Activated B cell treated with CpG ODN at 0.5 μM for 24 hours (primary cell): ENCODE measurements at regions of chr19 and their contacts with region 1.

Region 1: GRCh38 chr19:57578487-57579205 is at the start of gene ZNF416:
- DNase-seq: peak; percentile 79
- ATAC-seq: peak; percentile 92
- H3K4me3 Mint-ChIP-seq: peak within 1 kb of the TSS; percentile 86
- H3K27ac Mint-ChIP-seq: peak within 1 kb of the TSS; percentile 84
- H3K4me1 Mint-ChIP-seq: peaks cover 32% of the 10 kb centered on the region
- H3K27me3 Mint-ChIP-seq: no peaks in the 10 kb centered on the region
- CTCF ChIP-seq: no peak
- total RNA-seq, gene ZNF416: 12.6 and 13.8 TPM in 2 replicates

Region 2: DNA sequence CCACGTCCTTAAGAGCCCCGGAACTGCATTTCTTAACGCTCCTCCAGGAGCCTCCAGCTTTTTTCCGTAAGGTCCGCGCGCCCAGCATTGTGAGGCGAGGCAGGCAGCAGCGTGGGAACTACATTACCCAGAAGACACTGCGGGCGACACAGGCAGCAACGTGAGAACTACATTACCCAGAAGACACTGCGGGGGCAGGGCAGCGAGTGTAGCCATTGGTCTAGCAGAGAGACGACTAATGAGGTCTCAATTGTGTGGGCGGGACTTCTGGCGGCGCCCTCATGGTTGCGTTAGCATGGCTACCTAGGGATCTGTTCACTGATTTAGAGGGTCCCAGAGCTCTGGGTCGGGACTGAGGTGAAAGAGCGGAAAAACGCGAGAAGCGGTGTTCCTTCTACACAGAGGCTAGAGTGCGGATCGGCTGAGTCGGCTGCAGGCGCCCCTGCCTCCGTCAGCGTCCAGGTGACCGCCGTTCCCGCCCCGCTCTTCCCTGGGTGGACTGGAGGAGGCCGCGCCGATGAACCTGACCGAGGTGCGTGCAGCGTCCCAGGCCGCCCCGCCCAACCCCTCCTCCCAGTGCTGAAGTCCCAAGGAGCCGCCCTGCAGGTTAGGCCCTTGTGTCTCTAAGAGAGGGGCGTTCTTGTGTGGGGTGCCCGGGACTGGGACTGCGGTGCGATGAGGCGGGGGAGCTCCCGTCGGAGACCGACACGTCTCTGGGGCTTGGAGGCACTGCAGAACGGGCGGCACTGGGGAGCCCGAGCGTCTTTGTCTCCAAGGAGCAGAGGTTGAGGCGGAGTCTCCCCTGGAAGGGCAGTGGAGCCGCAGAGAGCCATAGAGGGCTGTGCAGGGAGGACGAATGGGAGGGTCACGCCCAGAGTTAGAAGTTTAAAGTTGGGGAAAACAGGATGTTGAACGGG is 143.3 kb before region 1 on chr19 and contains the start of gene ZNF749:
- CTCF ChIA-PET with region 1: no interaction called
- POLR2A ChIA-PET with region 1: no interaction called
- intact Hi-C with region 1: loop called (anchors 2 kb)
- DNase-seq: peak; percentile 84
- ATAC-seq: peak; percentile 99
- H3K4me3 Mint-ChIP-seq: peak within 1 kb of the TSS; percentile 97
- H3K27ac Mint-ChIP-seq: peak within 1 kb of the TSS; percentile 84
- H3K4me1 Mint-ChIP-seq: peaks cover 25% of the 10 kb centered on the region
- H3K27me3 Mint-ChIP-seq: no peaks in the 10 kb centered on the region
- CTCF ChIP-seq: no peak
- total RNA-seq, gene ZNF749: 16.4 and 18.2 TPM in 2 replicates

Region 3: GRCh38 chr19:57559404-57560025 is 19.1 kb before region 1 on chr19 and contains the start of gene ZNF550:
- CTCF ChIA-PET with region 1: no interaction called
- POLR2A ChIA-PET with region 1: no interaction called
- intact Hi-C with region 1: loop called (anchors 1 kb)
- DNase-seq: peak; percentile 83
- ATAC-seq: peak; percentile 98
- H3K4me3 Mint-ChIP-seq: peak within 1 kb of the TSS; percentile 92
- H3K27ac Mint-ChIP-seq: peak within 1 kb of the TSS; percentile 69
- H3K4me1 Mint-ChIP-seq: peaks cover 33% of the 10 kb centered on the region
- H3K27me3 Mint-ChIP-seq: no peaks in the 10 kb centered on the region
- CTCF ChIP-seq: no peak
- total RNA-seq, gene ZNF550: 16.8 and 18.7 TPM in 2 replicates

Region 4: DNA sequence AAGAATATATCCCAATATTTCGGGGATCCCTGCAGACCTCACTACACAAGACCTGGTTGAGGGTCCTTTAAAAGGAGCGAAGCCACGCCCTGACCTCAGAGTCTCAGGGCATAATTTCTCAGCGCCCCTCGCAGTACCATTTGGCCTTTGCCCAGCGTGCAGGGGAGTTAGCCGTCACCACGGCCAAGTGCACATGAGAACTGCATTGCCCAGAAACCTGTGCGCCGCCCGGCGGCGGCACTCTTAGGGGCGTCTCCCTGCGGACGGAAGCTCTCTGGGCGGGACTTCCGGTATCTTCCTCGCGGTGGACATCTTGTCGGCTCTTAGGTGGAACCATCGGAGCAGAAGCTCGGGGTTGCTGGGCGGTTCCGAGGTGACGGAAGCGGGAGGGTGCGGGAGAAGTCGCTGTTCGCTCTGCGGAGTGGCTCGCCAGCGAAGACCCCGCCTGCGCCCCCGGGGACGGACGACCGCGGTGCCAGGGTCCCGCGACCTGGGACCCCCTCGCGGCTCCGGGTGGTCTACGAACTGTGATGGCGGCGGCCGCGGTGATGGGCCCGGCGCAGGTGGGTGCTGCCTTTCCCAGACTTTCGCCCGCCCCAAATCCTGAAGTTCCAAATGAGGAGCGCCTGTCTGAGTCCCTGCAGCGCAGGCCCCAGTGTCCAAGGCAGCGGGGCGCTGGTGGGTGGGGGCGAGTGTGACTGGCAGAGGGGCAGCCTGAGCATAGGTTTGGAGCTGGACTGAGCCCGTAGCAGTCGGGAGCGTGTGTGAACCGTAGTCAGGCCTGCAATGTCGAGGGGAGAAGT is 35.5 kb after region 1 on chr19 and contains the start of gene ZNF134:
- CTCF ChIA-PET with region 1: no interaction called
- POLR2A ChIA-PET with region 1: interaction called, 9 read pairs
- intact Hi-C with region 1: loop called (anchors 1 kb)
- DNase-seq: peak; percentile 82
- ATAC-seq: peak; percentile 99
- H3K4me3 Mint-ChIP-seq: peak within 1 kb of the TSS; percentile 93
- H3K27ac Mint-ChIP-seq: peak within 1 kb of the TSS; percentile 78
- H3K4me1 Mint-ChIP-seq: peaks cover 39% of the 10 kb centered on the region
- H3K27me3 Mint-ChIP-seq: no peaks in the 10 kb centered on the region
- CTCF ChIP-seq: no peak
- total RNA-seq, gene ZNF134: 32.3 and 38.4 TPM in 2 replicates

Region 5: GRCh38 chr19:57682226-57682766 is 103.7 kb after region 1 on chr19:
- CTCF ChIA-PET with region 1: interaction called, 3 read pairs
- POLR2A ChIA-PET with region 1: interaction called, 5 read pairs
- intact Hi-C with region 1: loop called (anchors 1 kb)
- DNase-seq: no peak
- ATAC-seq: no peak
- H3K4me3 Mint-ChIP-seq: peak overlapping the region; percentile 98
- H3K27ac Mint-ChIP-seq: peak overlapping the region; percentile 90
- H3K4me1 Mint-ChIP-seq: peaks cover 39% of the 10 kb centered on the region
- H3K27me3 Mint-ChIP-seq: peaks cover 8% of the 10 kb centered on the region
- CTCF ChIP-seq: no peak

Region 6: GRCh38 chr19:58002384-58003173 is 423.9 kb after region 1 on chr19 and contains the start of gene ZNF606:
- CTCF ChIA-PET with region 1: no interaction called
- POLR2A ChIA-PET with region 1: interaction called, 12 read pairs
- intact Hi-C with region 1: loop called (anchors 1 kb)
- DNase-seq: peak; percentile 87
- ATAC-seq: peak; percentile 97
- H3K4me3 Mint-ChIP-seq: peak within 1 kb of the TSS; percentile 88
- H3K27ac Mint-ChIP-seq: peak within 1 kb of the TSS; percentile 87
- H3K4me1 Mint-ChIP-seq: peaks cover 38% of the 10 kb centered on the region
- H3K27me3 Mint-ChIP-seq: no peaks in the 10 kb centered on the region
- CTCF ChIP-seq: no peak
- total RNA-seq, gene ZNF606: 27.8 and 32.9 TPM in 2 replicates